HEK293 (cell line): ENCODE measurements at regions of chr12 and their contacts with region 1.

Region 1: GRCh38 chr12:121538699-121539061 is 42.1 kb downstream of the KDM2B start:
- H3K4me3 ChIP-seq: no peak overlapping the region
- H3K27ac ChIP-seq: no peak overlapping the region
- H3K4me1 ChIP-seq: peaks cover 14% of the 10 kb centered on the region; the same call in 1 of the 2 replicates
- CTCF ChIP-seq: no peak

Region 2: DNA sequence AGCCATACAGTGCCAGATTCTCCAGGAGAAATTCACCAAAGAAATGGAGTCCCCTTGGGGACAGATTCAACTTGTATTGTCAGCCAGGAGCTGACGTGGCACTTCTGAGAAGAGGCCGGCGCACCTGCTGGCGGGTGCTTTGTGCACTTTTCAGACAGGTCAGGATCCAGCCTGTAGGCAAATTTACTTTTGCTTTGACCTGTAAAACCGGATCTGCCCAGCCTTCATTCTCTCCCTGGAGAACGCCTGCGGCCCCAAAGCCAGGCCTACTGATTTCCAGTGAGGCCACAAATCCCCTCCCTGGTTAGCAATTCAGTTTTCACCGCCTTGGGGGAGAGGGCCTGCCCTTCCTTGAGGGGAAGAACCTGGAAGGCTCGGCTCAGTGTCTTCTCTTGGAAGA is 311.4 kb before region 1 on chr12:
- CTCF ChIA-PET with region 1: no interaction called
- POLR2A ChIA-PET with region 1: no interaction called
- H3K4me3 ChIP-seq: no peak overlapping the region
- H3K27ac ChIP-seq: no peak overlapping the region
- H3K4me1 ChIP-seq: no peaks in the 10 kb centered on the region
- CTCF ChIP-seq: no peak

Region 3: GRCh38 chr12:121626087-121626852 is 87.6 kb after region 1 on chr12 and contains the start of gene ORAI1:
- CTCF ChIA-PET with region 1: interaction called, 10 read pairs
- POLR2A ChIA-PET with region 1: no interaction called
- H3K4me3 ChIP-seq: peak within 1 kb of the TSS; percentile 65
- H3K27ac ChIP-seq: peak within 1 kb of the TSS; percentile 61; the same call in 1 of the 2 replicates
- H3K4me1 ChIP-seq: peaks cover 5% of the 10 kb centered on the region; the same call in 1 of the 2 replicates
- CTCF ChIP-seq: peak; percentile 31; the same call in 1 of the 2 replicates